Posterior vena cava (tissue), 2 donors: ENCODE measurements at regions of chr13 and their contacts with region 1.

Region 1: DNA sequence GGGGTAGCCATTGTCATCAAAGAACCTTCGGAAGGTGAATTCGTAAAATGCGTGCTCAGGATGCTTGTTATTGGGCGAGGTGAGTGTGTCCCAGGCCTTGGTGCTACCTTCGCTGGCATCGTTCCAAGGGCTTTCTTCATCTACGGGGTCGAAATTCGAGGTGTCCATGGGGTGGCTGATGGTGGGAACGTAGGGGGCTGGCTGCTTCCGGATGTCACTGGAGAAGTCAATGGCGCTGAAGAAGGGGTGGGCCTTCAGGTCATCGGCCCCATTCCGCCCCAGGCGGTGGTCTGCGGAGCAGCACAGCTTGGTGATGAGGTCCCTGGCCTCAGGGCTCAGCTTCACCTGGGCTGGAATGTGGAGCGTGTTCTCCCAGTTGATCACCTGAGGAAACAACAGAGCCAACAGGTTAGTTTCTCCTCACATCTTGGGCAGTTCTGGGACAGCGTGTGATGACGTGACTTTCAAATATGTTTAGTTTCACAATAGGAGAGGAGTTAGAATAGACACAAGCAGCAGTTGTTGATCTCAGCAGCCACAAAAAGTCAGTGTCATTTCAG is 72.5 kb upstream of the XPO4 start:
- DNase-seq: no peak

Region 2: GRCh38 chr13:19681517-19681916 is 1293.5 kb before region 1 on chr13:
- intact Hi-C with region 1: loop called in 1 of 2 experiments (anchors 5 kb)
- DNase-seq: no peak

Region 3: DNA sequence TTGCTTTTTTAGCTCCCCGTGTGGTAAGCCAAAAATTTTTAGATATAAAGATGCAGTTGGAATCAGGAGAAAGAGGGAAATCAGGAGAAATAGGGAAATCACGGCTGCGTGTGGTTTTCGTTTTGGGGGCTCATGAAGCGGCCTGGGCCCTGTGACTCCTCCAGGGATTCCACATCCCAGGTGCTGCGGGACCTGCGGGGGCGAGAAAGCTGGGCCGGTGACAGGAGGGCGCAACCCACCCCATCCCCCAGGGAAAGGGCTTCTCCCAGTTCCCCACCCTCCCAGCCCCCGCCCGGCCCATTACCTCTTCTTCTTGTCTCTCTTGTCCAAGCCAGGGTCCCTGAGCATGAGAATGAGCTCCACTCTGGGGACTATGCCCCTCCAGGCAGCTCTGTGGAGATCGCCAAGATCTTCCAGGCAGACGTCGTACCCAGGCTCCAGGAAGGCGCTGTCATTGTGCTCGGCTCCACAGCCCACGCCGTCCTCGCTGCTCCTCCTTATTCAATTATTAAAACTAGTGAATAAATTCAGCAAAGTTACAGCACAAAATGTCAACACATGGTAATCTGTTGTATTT is 312.4 kb after region 1 on chr13:
- intact Hi-C with region 1: no loop called
- DNase-seq: no peak